ENCODE measurements at regions of chr17 and their contacts with region 1.

Region 1: GRCh38 chr17:48084932-48085444 is 16.3 kb downstream of the CBX1 start:
- DNase-seq: no peak
- ATAC-seq: no peak
- H3K4me3 ChIP-seq: no peak overlapping the region
- H3K4me3 Mint-ChIP-seq: no peak overlapping the region
- H3K27ac ChIP-seq: no peak overlapping the region
- H3K27ac Mint-ChIP-seq: no peak overlapping the region
- H3K4me1 ChIP-seq: peaks cover 5 to 7% of the 10 kb centered on the region in 2 experiments
- H3K4me1 Mint-ChIP-seq: peaks cover 7 to 22% (median 17%) of the 10 kb centered on the region in 3 donors
- H3K27me3 ChIP-seq: no peaks in the 10 kb centered on the region
- H3K27me3 Mint-ChIP-seq: no peaks in the 10 kb centered on the region

Region 2: DNA sequence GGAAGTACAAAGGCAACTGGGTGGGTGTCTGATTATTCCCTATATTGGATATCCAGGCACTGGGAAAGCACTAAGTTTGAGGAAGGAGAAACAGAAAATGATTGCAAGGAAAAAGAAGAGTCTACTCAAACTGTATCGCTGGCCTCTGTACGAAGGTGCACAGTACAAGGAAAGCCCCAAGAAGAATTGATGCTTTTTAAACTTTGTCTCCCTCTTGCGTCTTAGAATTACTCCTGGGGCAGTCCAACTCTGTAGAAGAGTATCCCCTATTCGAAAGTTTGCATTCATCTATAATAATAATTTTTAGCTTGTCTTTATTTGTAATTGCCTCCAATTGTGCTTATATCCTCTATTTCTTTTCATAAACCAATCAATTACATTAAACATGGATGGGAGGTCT is 101.8 kb after region 1 on chr17:
- CTCF ChIA-PET with region 1: no interaction called
- POLR2A ChIA-PET with region 1: interaction called in 1 of 2 experiments, 10 read pairs
- DNase-seq: no peak
- ATAC-seq: no peak
- H3K4me3 ChIP-seq: no peak overlapping the region
- H3K4me3 Mint-ChIP-seq: no peak overlapping the region
- H3K27ac ChIP-seq: no peak overlapping the region
- H3K27ac Mint-ChIP-seq: no peak overlapping the region
- H3K4me1 ChIP-seq: no peaks in the 10 kb centered on the region
- H3K4me1 Mint-ChIP-seq: peaks cover 0 to 13% (median 0%) of the 10 kb centered on the region in 3 donors
- H3K27me3 ChIP-seq: no peaks in the 10 kb centered on the region
- H3K27me3 Mint-ChIP-seq: no peaks in the 10 kb centered on the region

Measured in T-cell (primary cell).